Astrocyte of the spinal cord (primary cell): ENCODE measurements at regions of chr1 and their contacts with region 1.

Region 1: DNA sequence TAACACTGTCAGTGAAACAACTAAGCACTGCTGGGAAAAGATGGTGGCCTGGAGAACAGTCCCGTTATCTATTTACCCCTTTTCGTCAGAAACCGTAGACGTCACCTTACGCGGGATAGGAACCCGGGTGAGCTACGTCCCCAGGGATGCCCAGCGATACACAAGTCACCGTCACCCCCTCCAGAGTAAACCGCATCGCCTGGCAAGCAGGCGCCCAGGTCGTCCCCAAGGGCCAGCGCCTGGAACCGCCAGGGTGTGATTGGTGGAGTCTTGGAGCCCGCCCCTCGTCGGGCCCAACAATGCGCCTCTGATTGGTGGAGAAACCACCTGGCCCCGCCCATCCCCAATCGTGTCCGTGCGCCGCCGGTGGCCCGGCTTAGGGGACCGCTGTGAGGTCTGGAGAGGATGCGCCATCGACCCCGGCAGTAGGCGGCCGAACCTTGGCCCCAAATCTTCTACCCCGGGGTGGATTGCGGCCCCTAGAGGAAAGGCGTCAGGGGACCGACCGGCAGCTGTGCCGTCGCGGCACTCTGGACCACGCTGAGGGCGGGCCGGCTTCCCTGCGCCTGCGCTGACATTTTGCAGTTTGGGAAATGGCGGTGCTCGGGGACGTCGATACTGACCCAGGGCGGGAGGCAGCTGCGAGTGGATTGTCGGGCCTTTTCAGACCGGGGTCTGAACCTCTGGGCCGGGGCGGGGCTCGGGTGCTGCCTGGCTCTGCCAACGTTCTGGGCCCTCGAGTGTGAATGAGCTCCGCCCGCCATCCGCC is 34.4 kb downstream of the SLC2A1 start:
- DNase-seq: peak; percentile 89
- H3K4me3 ChIP-seq: peak overlapping the region; percentile 64
- CTCF ChIP-seq: peak; percentile 9

Region 2: GRCh38 chr1:42456010-42456758 is 468.1 kb before region 1 on chr1 and contains the starts of genes PPCS and ZMYND12:
- in situ Hi-C with region 1: no loop called
- DNase-seq: peak; percentile 87
- H3K4me3 ChIP-seq: peak within 1 kb of the TSS; percentile 65
- CTCF ChIP-seq: no peak

Region 3: DNA sequence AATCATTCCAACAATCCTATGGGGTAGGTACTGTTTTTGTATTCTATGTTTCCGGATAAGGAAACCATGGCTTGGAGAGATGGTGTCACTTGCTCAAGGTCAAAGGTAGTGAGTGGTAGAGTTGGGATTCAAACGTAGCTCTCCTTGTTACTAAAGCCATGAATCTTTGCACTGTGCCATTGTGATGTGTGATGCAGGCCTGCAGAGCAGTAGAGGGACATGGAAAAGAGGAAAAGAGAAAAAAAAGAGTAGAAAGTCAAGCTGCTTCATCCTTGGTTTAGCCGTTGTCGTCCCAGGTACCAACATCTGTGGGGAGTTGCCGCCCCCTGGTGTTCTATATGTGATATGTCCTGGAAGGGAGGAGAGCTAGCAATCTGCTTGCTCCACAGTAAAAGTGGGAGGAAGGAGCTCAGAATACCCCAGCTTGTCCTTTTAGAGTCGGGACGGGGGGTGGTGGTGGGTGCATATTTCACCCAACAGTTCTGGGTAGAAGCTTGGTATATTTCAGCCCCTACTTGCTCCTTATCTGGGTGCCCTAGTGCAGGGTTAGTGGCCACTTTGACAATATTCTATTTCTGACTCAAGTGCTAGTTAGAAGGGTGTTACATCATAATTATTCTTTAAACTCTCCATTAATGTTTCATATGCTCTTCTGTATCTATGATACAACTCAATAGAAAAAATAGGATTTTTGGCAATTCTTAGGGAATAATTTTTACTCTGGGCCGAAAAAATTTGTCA is 149.4 kb after region 1 on chr1:
- in situ Hi-C with region 1: loop called (anchors 25 kb)
- DNase-seq: peak; percentile 79
- H3K4me3 ChIP-seq: no peak overlapping the region
- CTCF ChIP-seq: peak; percentile 70

Region 4: GRCh38 chr1:43143441-43143888 is 219.2 kb after region 1 on chr1:
- in situ Hi-C with region 1: no loop called
- DNase-seq: no peak
- H3K4me3 ChIP-seq: no peak overlapping the region
- CTCF ChIP-seq: peak; percentile 28